ENCODE measurements at regions of chr12 and their contacts with region 1.

Region 1: DNA sequence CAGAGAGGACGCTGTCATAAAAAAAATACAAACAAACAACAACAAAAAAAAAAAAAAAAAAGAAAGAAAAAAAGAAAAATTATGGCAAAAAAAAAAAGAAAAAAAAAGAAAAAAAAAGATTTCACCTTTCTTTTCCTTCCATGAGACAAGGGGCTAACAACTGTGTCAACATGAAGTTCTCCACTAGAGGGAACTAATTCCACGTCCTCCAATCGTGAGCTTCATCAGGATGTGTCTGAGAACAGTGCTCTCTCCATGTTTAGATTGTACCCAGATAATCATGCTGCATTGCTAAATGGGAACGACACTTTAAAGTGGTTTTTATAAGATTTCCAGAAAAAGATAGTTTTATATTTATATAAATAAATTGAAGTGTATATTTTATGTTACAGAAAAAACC is 96.2 kb upstream of the PTPRB start:
- DNase-seq: peak in 3 of 7 donors; percentile 22 to 35 (median 27)
- H3K4me3 ChIP-seq: no peak overlapping the region
- H3K27ac ChIP-seq: no peak overlapping the region
- H3K4me1 ChIP-seq: no peaks in the 10 kb centered on the region
- H3K27me3 ChIP-seq: no peaks in the 10 kb centered on the region
- CTCF ChIP-seq: peak; percentile 46 to 80 (median 68)
- POLR2A ChIP-seq: no peak

Region 2: DNA sequence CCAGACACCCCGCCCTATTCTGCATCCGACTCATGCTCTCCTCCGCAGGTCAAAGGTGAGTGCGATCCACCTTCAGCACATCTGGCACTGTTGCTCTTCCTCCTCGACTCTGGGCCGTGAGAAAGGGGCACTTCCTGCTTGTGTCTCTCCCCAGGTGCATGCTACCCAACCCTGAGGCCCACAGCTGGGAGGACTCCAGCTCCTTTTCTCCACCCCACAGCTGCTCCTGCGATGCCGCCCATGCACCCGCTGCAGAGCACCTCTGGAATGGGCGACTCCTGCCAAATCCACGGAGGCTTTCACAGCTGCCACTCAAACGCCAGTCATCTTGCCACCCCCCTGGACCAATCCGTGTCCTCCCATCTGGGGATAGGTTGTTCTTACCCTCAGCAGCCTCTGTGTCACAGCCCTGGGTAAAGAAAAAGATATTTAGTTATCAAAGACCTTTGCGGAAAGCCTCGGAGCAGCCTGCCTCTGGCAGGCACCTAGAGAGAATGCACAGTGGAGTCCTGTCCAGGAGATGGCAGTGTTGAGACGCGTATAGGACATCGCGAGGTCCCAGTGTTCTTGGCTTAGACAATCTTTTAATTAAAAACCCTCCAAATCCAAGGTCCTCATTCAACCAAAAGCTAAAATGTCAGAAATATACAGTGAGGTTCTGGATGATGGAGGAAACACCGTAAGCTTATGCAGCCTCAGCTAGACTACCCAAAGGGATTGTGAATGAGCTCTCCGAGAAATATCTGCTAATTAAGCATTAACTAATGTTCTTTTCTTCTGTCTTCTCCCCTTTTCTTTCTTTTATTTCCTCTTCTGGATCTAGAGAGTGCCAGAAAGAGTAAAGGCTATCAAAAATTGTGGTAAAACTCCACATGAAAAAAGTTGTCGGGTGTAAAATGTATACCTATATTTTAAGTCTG is 854.1 kb before region 1 on chr12:
- intact Hi-C with region 1: loop called (anchors 5 to 10 kb)
- DNase-seq: peak; percentile 60 to 92 (median 82)
- H3K4me3 ChIP-seq: peak overlapping the region in 1 of 4 donors; percentile 27
- H3K27ac ChIP-seq: no peak overlapping the region
- H3K4me1 ChIP-seq: peaks cover 2 to 9% of the 10 kb centered on the region in 2 donors
- H3K27me3 ChIP-seq: no peaks in the 10 kb centered on the region
- CTCF ChIP-seq: peak; percentile 68 to 91 (median 86)
- POLR2A ChIP-seq: no peak

Region 3: GRCh38 chr12:70590051-70590450 is 143.3 kb before region 1 on chr12:
- intact Hi-C with region 1: loop called in 1 of 2 experiments (anchors 5 kb)
- DNase-seq: peak; percentile 68 to 93 (median 84)
- H3K4me3 ChIP-seq: no peak overlapping the region
- H3K27ac ChIP-seq: no peak overlapping the region
- H3K4me1 ChIP-seq: no peaks in the 10 kb centered on the region
- H3K27me3 ChIP-seq: no peaks in the 10 kb centered on the region
- CTCF ChIP-seq: peak; percentile 81 to 88 (median 86)
- POLR2A ChIP-seq: no peak

Region 4: GRCh38 chr12:70853326-70853725 is 119.9 kb after region 1 on chr12:
- intact Hi-C with region 1: loop called in 1 of 2 experiments (anchors 10 kb)
- DNase-seq: peak in 3 of 7 donors; percentile 8 to 37 (median 34)
- H3K4me3 ChIP-seq: no peak overlapping the region
- H3K27ac ChIP-seq: no peak overlapping the region
- H3K4me1 ChIP-seq: no peaks in the 10 kb centered on the region
- H3K27me3 ChIP-seq: no peaks in the 10 kb centered on the region
- CTCF ChIP-seq: no peak
- POLR2A ChIP-seq: no peak

Region 5: GRCh38 chr12:71014180-71014785 is 280.9 kb after region 1 on chr12:
- intact Hi-C with region 1: loop called in 1 of 2 experiments (anchors 10 kb)
- DNase-seq: no peak
- H3K4me3 ChIP-seq: no peak overlapping the region
- H3K27ac ChIP-seq: no peak overlapping the region
- H3K4me1 ChIP-seq: no peaks in the 10 kb centered on the region
- H3K27me3 ChIP-seq: no peaks in the 10 kb centered on the region
- CTCF ChIP-seq: peak in 5 of 6 experiments; percentile 17 to 66 (median 42)
- POLR2A ChIP-seq: no peak

Measured in adrenal gland (tissue), 19 donors.